ENCODE measurements at regions of chr7 and their contacts with region 1.

Region 1: GRCh38 chr7:10205696-10206095 is 768.0 kb upstream of the PHF14 start:
- DNase-seq: no peak
- ATAC-seq: no peak
- H3K4me3 ChIP-seq: no peak overlapping the region
- H3K27ac ChIP-seq: no peak overlapping the region
- H3K4me1 ChIP-seq: no peaks in the 10 kb centered on the region
- H3K27me3 ChIP-seq: no peaks in the 10 kb centered on the region

Region 2: GRCh38 chr7:10257438-10257837 is 51.7 kb after region 1 on chr7:
- intact Hi-C with region 1: loop called in 1 of 2 experiments (anchors 2 kb)
- DNase-seq: no peak
- ATAC-seq: no peak
- H3K4me3 ChIP-seq: no peak overlapping the region
- H3K27ac ChIP-seq: no peak overlapping the region
- H3K4me1 ChIP-seq: no peaks in the 10 kb centered on the region
- H3K27me3 ChIP-seq: no peaks in the 10 kb centered on the region

Measured in aorta (tissue), 5 donors.